ENCODE measurements at regions of chr15 and their contacts with region 1.

Region 1: GRCh38 chr15:33729653-33730052 is 238.6 kb upstream of the CHRM5 start:
- DNase-seq: peak; percentile 6
- ATAC-seq: peak; percentile 59; the same call in 1 of the 2 replicates
- H3K4me3 ChIP-seq: no peak overlapping the region
- H3K27ac ChIP-seq: no peak overlapping the region
- H3K4me1 ChIP-seq: no peaks in the 10 kb centered on the region
- H3K27me3 ChIP-seq: 0 out of 2 replicates have a peak, but pooled peaks cover 4% of the 10 kb centered on the region
- CTCF ChIP-seq: peak; percentile 7 to 43 (median 25); a peak in 3 of 6 replicates
- POLR2A ChIP-seq: no peak
- RAD21 ChIP-seq: peak; percentile 28; the same call in 1 of the 2 replicates

Region 2: DNA sequence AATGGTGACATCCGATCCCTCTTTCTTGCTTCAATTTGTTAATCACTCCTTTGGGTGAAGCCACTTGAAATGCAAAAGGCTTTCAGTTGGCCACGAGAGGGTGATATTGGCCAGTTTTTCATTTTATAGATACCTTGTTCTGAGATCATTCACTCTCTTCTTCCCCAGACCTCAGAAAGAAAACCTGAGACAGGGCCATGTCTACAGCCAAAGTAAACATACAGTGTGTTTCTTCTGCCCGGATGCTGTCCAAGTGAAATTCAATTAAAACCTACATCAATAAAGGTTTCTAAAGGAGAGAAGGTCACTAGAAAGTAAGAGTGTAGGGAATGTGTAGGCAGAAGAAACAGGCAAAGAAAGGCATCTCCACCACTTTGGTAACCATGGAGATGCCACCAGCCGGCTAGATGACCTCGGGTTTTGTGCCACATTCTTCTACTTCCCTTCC is 495.6 kb before region 1 on chr15:
- CTCF ChIA-PET with region 1: interaction called, 20 read pairs
- POLR2A ChIA-PET with region 1: no interaction called
- RAD21 ChIA-PET with region 1: no interaction called
- intact Hi-C with region 1: loop called (anchors 1 kb)
- DNase-seq: peak; percentile 41
- ATAC-seq: peak; percentile 86
- H3K4me3 ChIP-seq: no peak overlapping the region
- H3K27ac ChIP-seq: no peak overlapping the region
- H3K4me1 ChIP-seq: no peaks in the 10 kb centered on the region
- H3K27me3 ChIP-seq: peaks cover 32% of the 10 kb centered on the region
- CTCF ChIP-seq: peak; percentile 41 to 78 (median 46); a peak in 4 of 6 replicates
- POLR2A ChIP-seq: no peak
- RAD21 ChIP-seq: peak; percentile 62

Region 3: DNA sequence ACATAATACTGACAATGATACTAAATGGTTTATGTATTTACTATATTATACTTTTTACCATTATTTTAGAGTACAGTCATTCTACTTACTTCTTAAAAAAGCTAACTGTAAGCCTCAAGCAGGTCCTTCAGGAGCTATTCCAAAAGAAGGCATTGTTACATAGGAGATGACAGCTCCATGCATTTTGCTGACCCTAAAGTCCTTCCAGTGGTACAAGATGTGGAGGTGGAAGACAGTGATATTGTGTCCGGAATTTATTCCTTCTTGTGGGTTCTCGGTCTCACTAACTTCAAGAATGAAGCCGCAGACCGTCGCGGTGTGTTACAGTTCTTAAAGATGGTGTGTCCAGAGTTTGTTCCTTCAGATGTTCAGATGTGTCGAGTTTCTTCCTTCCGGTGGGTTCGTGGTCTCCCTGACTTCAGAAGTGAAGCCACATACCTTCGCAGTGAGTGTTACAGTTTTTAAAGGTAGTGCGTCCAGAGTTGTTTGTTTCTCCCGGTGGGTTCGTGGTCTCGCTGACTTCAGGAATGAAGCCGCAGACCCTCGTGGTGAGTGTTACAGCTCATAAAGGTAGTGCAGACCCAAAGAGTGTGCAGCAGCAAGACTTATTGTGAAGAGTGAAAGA is 288.5 kb after region 1 on chr15:
- CTCF ChIA-PET with region 1: no interaction called
- POLR2A ChIA-PET with region 1: no interaction called
- RAD21 ChIA-PET with region 1: no interaction called
- intact Hi-C with region 1: no loop called
- DNase-seq: no peak
- ATAC-seq: no peak
- H3K4me3 ChIP-seq: no peak overlapping the region
- H3K27ac ChIP-seq: no peak overlapping the region
- H3K4me1 ChIP-seq: no peaks in the 10 kb centered on the region
- H3K27me3 ChIP-seq: no peaks in the 10 kb centered on the region
- CTCF ChIP-seq: no peak
- POLR2A ChIP-seq: no peak
- RAD21 ChIP-seq: no peak